ENCODE measurements at regions of chr13 and their contacts with region 1.

Region 1: GRCh38 chr13:49300739-49301589 is 53.2 kb downstream of the CDADC1 start:
- DNase-seq: peak; percentile 33
- H3K4me3 ChIP-seq: peak overlapping the region in 2 of 3 experiments; percentile 33 to 48
- H3K27ac ChIP-seq: no peak overlapping the region
- H3K4me1 ChIP-seq: peaks cover 3% of the 10 kb centered on the region
- H3K27me3 ChIP-seq: no peaks in the 10 kb centered on the region
- CTCF ChIP-seq: peak; percentile 79 to 93 (median 81)

Region 2: GRCh38 chr13:49443704-49444523 is 142.9 kb after region 1 on chr13 and contains the starts of genes CAB39L and SETDB2:
- dilution Hi-C with region 1: loop called (anchors 25 kb)
- DNase-seq: peak; percentile 90
- H3K4me3 ChIP-seq: peak within 1 kb of the TSS; percentile 88 to 99 (median 95)
- H3K27ac ChIP-seq: peak within 1 kb of the TSS; percentile 93
- H3K4me1 ChIP-seq: no peaks in the 10 kb centered on the region
- H3K27me3 ChIP-seq: no peaks in the 10 kb centered on the region
- CTCF ChIP-seq: peak; percentile 47 to 59 (median 48)
- polyA plus RNA-seq, gene CAB39L: 8.0 to 10.1 TPM (median 8.6 TPM) in 3 replicates
- polyA plus RNA-seq, gene SETDB2: 2.5 to 5.6 TPM (median 3.4 TPM) in 3 replicates

Region 3: DNA sequence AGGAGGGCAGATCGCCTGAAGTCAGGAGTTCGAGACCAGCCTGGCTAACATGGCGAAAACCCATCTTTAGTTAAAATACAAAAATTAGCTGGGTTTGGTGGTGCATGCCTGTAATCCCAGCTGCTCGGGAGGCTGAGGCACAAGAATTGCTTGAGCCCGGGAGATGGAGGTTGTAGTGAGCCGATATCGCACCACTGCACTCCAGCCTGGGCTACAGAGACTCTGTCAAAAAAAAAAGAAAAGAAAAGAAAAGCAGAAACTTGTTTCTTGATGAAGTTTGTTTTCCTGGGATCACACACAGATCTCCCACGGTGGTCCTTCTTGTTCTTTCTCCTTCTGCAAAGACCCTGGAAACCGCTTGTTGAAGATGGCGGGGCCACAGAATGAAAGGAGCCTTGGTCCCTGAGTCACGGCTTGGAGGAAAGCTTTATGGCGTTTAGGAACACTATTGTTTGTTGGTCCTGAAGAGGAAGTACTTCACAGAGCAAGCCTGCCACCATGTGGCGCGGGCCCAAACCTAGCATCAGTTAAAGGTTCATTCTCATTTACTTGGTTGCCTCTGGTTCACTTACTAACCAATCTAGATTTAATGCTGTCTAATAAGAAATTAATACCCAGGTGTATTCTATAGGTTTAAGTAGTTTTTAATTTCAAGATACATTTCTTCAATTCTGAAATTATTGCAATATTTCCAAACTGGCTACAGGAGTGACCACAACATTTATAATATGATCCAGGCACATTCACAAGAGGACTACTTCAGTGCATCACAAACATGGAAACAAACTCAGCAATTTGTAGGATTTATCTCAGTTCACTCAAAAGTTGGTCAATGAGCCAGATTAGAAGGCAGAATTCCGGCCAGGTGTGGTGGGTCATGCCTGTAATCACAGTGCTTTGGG is 306.0 kb after region 1 on chr13:
- dilution Hi-C with region 1: no loop called
- DNase-seq: no peak
- H3K4me3 ChIP-seq: peak overlapping the region; percentile 11 to 53 (median 45)
- H3K27ac ChIP-seq: no peak overlapping the region
- H3K4me1 ChIP-seq: no peaks in the 10 kb centered on the region
- H3K27me3 ChIP-seq: no peaks in the 10 kb centered on the region
- CTCF ChIP-seq: peak; percentile 77 to 98 (median 87)